H1 (cell line): ENCODE measurements at regions of chr21 and their contacts with region 1.

Region 1: DNA sequence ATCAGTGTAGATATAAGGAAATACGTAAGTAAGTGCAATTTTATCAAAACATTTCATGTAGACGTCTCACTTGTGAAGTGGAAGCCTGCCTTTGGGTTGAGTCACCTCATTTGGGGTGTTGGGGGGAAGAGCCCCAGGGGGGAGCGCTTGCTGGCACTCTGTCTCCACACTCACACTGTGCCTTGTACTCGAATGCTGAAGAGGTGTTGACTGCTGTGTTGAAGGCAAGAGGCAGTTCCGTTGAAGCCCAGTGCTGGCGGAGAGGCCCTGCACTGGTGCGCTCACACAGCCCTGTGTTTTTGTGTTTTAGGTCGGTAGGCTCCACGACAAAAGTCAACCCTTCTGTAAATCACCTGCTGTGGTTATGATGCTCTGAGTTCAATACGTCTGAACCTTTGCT is 131.9 kb upstream of the COL6A1 start:
- DNase-seq: no peak
- H3K4me3 ChIP-seq: no peak overlapping the region
- H3K27ac ChIP-seq: no peak overlapping the region
- H3K4me1 ChIP-seq: peaks cover 0 to 3% (median 1%) of the 10 kb centered on the region in 4 experiments; a peak in 3 of 7 replicates
- H3K27me3 ChIP-seq: no peaks in the 10 kb centered on the region; a peak in 2 of 7 replicates
- CTCF ChIP-seq: no peak
- EP300 ChIP-seq: no peak
- POLR2A ChIP-seq: no peak
- RAD21 ChIP-seq: no peak

Region 2: DNA sequence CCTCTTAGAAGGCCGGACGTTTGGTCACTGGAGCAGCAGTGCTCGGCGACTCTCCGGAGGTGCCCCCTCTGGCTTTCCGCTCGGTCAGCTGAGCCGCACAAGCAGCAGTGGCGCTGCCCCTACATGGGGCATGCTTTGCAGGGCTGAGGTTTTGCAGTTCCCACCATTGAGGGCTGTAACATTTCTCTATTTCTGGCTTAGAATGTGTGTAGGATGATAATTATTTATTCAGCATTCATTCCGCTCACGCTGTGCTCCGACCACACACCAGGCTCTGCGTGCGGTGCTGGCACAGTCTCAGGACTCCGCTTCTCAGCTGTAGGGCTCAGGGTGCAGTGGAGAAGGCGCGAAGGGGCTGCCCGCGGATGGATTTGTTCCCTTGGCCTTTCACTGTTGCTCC is 86.6 kb before region 1 on chr21:
- CTCF ChIA-PET with region 1: no interaction called
- POLR2A ChIA-PET with region 1: no interaction called
- DNase-seq: no peak
- H3K4me3 ChIP-seq: no peak overlapping the region
- H3K27ac ChIP-seq: no peak overlapping the region
- H3K4me1 ChIP-seq: 0 out of 7 replicates have a peak, but pooled peaks cover 0 to 2% (median 0%) of the 10 kb centered on the region in 4 experiments
- H3K27me3 ChIP-seq: no peaks in the 10 kb centered on the region
- CTCF ChIP-seq: no peak
- EP300 ChIP-seq: no peak
- POLR2A ChIP-seq: no peak
- RAD21 ChIP-seq: no peak

Region 3: GRCh38 chr21:45862543-45863207 is 13.0 kb after region 1 on chr21:
- CTCF ChIA-PET with region 1: interaction called, 17 read pairs
- POLR2A ChIA-PET with region 1: no interaction called
- DNase-seq: no peak
- H3K4me3 ChIP-seq: no peak overlapping the region
- H3K27ac ChIP-seq: no peak overlapping the region
- H3K4me1 ChIP-seq: no peaks in the 10 kb centered on the region; a peak in 1 of 7 replicates
- H3K27me3 ChIP-seq: no peaks in the 10 kb centered on the region
- CTCF ChIP-seq: no peak
- EP300 ChIP-seq: no peak
- POLR2A ChIP-seq: no peak
- RAD21 ChIP-seq: no peak

Region 4: GRCh38 chr21:46082900-46083790 is 233.5 kb after region 1 on chr21:
- CTCF ChIA-PET with region 1: no interaction called
- POLR2A ChIA-PET with region 1: no interaction called
- DNase-seq: no peak
- H3K4me3 ChIP-seq: no peak overlapping the region
- H3K27ac ChIP-seq: no peak overlapping the region
- H3K4me1 ChIP-seq: peaks cover 0 to 4% (median under 1%) of the 10 kb centered on the region in 4 experiments; a peak in 3 of 7 replicates
- H3K27me3 ChIP-seq: no peaks in the 10 kb centered on the region
- CTCF ChIP-seq: no peak
- EP300 ChIP-seq: no peak
- POLR2A ChIP-seq: no peak
- RAD21 ChIP-seq: no peak